Esophagus squamous epithelium (tissue), 5 donors: ENCODE measurements at regions of chr1 and their contacts with region 1.

Region 1: DNA sequence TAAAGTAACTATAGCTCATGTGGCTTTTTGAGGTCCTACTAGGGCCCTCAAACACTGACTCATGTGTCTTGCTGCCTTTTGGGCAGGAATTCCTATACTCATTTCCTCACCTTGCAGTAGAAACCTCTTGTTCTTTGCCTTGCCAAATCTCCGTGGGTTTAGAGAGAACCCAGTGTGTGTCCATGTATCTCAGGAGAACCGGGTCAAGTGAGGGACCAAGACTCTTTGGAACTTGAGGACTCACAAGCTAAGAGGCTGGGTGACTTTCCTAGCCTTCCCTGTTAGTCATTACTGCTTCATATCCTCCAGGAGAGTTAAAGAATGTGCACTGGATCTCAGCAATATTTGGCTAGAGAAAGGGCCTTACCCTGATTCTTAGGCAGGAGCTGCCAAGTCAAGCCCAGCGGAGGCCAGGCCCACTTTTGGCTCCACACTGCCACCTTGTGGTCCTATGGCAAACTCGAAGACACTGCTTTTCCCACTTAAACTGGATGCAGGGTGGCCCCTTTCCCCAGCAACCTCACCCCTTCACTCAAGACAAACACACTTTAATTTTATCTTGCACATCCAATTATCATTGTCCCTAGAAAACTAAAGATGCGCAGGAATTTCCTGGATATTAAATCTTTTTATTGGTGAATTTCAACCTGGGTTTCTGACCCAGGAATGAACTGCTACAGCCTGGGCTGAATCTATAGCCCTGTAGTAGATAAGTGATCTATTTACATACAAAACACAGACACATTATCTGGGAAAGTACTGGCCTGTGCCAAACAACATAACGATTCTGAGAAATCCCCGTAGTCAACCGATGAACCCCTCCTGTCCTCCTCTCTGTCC is 10.6 kb downstream of the AVPR1B start:
- DNase-seq: no peak
- H3K4me3 ChIP-seq: no peak overlapping the region
- H3K27ac ChIP-seq: peak overlapping the region in 1 of 4 donors; percentile 27
- H3K4me1 ChIP-seq: peaks cover 0 to 16% (median 0%) of the 10 kb centered on the region in 3 donors
- H3K27me3 ChIP-seq: peaks cover 0 to 25% (median 0%) of the 10 kb centered on the region in 4 donors
- CTCF ChIP-seq: peak; percentile 74 to 92 (median 86)
- POLR2A ChIP-seq: no peak

Region 2: DNA sequence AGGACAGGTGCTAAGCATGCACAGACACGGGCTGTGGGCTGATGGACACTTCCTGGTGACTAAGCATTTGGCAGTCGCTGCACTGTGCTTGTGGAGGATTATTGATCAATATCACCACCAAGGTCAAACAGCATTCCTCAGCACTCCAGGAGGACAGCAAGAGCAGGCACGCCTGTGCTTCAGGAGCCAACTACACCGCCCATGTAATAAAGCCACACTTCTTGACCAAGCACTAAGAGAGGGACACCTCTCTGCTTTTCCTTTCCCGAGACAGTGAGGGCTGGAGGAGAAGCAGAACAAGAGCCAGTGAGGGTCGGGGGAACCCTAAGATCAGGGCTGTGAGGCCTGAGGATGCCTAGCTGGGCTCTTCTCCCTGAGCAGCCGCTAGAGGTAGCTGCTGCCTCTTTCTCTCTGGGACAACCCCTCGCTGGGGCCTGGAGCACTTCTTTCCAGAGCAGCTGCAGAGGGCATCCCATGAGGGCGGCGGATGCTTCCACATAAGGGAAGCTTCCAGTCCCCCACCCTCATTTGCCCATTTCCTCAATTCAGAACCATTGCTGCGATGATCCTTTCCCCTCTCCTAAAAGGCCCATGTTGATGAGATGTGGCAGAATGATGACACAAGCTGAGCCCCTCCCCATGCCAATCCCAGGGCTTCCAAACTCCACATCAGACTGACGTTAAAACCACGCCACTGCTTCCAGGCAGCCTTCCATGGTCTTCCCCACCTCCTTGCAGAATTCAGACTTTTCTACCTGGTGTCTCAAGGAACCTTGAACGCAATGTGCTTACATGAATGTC is 122.4 kb before region 1 on chr1:
- intact Hi-C with region 1: loop called (anchors 5 kb)
- DNase-seq: no peak
- H3K4me3 ChIP-seq: no peak overlapping the region
- H3K27ac ChIP-seq: peak overlapping the region; percentile 39 to 68 (median 61)
- H3K4me1 ChIP-seq: peaks cover 12 to 63% (median 15%) of the 10 kb centered on the region in 3 donors
- H3K27me3 ChIP-seq: no peaks in the 10 kb centered on the region
- CTCF ChIP-seq: peak; percentile 37 to 87 (median 70)
- POLR2A ChIP-seq: no peak

Region 3: GRCh38 chr1:206029484-206029883 is 77.1 kb before region 1 on chr1:
- intact Hi-C with region 1: loop called (anchors 10 kb)
- DNase-seq: no peak
- H3K4me3 ChIP-seq: no peak overlapping the region
- H3K27ac ChIP-seq: no peak overlapping the region
- H3K4me1 ChIP-seq: peaks cover 0 to 53% (median 9%) of the 10 kb centered on the region in 3 donors
- H3K27me3 ChIP-seq: no peaks in the 10 kb centered on the region
- CTCF ChIP-seq: no peak
- POLR2A ChIP-seq: no peak

Region 4: DNA sequence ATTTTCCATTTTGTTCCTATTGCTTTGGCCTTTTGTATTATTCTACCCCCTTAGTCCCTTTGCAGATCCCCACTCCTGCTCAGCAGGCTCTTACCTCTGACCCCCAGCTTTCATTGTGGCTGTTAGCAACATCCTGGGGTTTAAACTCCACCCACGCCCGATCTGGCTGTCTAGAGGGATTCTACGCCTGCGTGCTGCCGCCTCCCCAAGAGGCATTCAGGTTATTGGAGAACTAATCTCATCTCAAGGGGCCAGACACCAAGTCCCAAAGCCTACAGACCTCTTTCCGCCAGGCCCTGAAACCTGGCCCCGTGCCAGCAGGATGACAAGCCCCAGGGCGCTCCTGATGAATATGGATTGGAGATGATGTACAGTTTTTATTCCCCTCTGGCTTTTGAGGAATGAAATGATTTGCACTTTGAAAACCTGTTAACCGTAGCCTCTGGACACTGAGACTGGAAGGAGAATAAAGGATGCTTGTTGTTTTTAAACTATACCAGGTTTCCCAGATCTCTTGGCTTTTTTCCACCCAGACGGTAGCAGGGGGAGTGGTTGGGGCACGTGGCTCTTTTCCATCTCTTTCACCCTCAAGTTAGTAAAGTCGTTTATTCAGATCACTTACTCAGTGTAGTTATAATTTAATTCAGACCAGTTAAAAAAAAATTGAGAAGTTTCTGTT is 349.3 kb after region 1 on chr1:
- intact Hi-C with region 1: no loop called
- DNase-seq: no peak
- H3K4me3 ChIP-seq: no peak overlapping the region
- H3K27ac ChIP-seq: peak overlapping the region in 1 of 4 donors; percentile 64
- H3K4me1 ChIP-seq: peaks cover 13 to 26% (median 14%) of the 10 kb centered on the region in 3 donors
- H3K27me3 ChIP-seq: no peaks in the 10 kb centered on the region
- CTCF ChIP-seq: no peak
- POLR2A ChIP-seq: no peak